H1 (cell line): ENCODE measurements at regions of chr11 and their contacts with region 1.

Region 1: GRCh38 chr11:86218125-86219084 is 26.1 kb upstream of the EED start:
- DNase-seq: peak; percentile 43 to 79
- H3K4me3 ChIP-seq: no peak overlapping the region; a peak in 1 of 8 replicates
- H3K27ac ChIP-seq: no peak overlapping the region
- H3K4me1 ChIP-seq: no peaks in the 10 kb centered on the region
- H3K27me3 ChIP-seq: no peaks in the 10 kb centered on the region
- CTCF ChIP-seq: peak; percentile 62 to 84 (median 81)
- EP300 ChIP-seq: no peak
- POLR2A ChIP-seq: no peak
- RAD21 ChIP-seq: peak; percentile 79 to 82

Region 2: GRCh38 chr11:86202013-86202336 is 16.4 kb before region 1 on chr11:
- CTCF ChIA-PET with region 1: interaction called, 21 read pairs
- POLR2A ChIA-PET with region 1: interaction called, 3 read pairs
- DNase-seq: no peak
- H3K4me3 ChIP-seq: peak overlapping the region in 3 of 4 experiments; percentile 13 to 50 (median 27); a peak in 5 of 8 replicates
- H3K27ac ChIP-seq: no peak overlapping the region
- H3K4me1 ChIP-seq: peaks cover 0 to 3% (median 0%) of the 10 kb centered on the region in 4 experiments; a peak in 1 of 7 replicates
- H3K27me3 ChIP-seq: peaks cover 0 to 2% (median under 1%) of the 10 kb centered on the region in 4 experiments; a peak in 4 of 7 replicates
- CTCF ChIP-seq: no peak
- EP300 ChIP-seq: no peak
- POLR2A ChIP-seq: no peak
- RAD21 ChIP-seq: no peak

Region 3: DNA sequence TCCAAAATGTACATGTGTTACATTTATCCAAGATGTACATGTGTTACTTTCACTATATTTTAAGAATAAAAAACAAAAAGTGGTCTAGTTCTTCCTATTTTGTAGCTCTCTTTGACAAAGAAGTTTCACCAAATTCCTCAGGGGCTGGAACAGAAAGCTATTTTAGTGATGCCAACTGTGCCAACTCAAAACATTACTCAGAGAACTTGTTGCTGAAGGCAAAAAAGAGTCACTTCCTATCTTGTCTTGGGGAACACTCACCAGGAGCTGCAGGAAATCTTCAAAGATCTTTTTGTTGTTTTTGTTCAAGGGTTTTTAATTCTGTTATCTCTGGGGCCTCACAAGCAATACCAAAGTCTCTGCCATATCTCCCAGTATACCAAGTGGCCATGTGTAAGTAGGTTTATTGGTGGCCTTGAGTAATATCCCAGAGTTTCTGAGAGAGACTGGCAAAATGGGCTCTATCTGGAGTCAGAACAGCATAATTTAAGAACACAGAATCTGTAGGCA is 12.6 kb after region 1 on chr11:
- CTCF ChIA-PET with region 1: interaction called, 18 read pairs
- POLR2A ChIA-PET with region 1: interaction called, 9 read pairs
- DNase-seq: no peak
- H3K4me3 ChIP-seq: no peak overlapping the region
- H3K27ac ChIP-seq: no peak overlapping the region
- H3K4me1 ChIP-seq: peaks cover 0 to 10% (median 0%) of the 10 kb centered on the region in 4 experiments; a peak in 1 of 7 replicates
- H3K27me3 ChIP-seq: no peaks in the 10 kb centered on the region
- CTCF ChIP-seq: no peak
- EP300 ChIP-seq: no peak
- POLR2A ChIP-seq: no peak
- RAD21 ChIP-seq: no peak